ENCODE measurements at regions of chr11 and their contacts with region 1.

Region 1: DNA sequence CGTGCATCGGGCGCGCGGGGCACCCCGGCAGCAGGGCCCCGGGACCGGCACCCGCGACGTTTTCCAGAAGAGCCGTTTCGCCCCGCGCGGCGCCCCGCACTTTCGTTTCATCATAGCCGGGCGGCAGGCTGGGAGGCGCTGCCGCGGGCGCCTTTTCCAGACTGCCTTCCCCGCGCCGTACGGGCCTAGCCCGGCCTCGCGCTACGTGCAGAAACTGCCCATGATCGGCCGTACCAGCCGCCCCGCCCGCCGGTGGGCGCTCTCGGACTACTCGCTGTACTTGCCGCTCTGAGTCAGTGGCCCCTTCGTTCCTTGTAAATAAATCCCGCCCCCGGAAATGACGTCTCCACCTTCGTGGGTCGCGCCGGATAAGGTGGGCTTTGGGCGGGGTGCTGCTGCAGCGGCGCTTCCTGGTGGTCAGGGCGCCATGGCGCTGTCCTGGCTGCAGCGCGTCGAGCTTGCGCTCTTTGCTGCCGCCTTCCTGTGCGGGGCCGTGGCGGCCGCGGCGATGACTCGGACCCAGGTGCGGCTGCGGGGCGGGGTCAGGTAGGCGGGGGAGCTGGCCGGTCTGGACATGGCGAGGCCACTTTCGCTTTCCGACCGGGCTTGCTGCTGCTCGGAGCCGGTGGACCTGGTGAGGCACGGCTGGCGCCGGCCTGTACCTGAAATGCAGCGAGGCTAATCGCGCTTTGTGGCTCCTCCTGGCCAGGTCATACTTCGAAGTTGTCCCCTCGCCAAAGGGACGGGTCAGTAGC is at the start of gene TMEM179B:
- DNase-seq: peak; percentile 95 to 99 (median 96)
- H3K4me3 ChIP-seq: peak within 1 kb of the TSS; percentile 73 to 95
- H3K4me3 Mint-ChIP-seq: peak within 1 kb of the TSS; percentile 93 to 97 (median 96)
- H3K27ac ChIP-seq: peak within 1 kb of the TSS; percentile 84
- H3K27ac Mint-ChIP-seq: peak within 1 kb of the TSS; percentile 89 to 98 (median 97)
- H3K4me1 ChIP-seq: peaks cover 45% of the 10 kb centered on the region
- H3K4me1 Mint-ChIP-seq: peaks cover 29 to 61% (median 47%) of the 10 kb centered on the region in 4 donors
- H3K27me3 ChIP-seq: no peaks in the 10 kb centered on the region
- H3K27me3 Mint-ChIP-seq: no peaks in the 10 kb centered on the region
- total RNA-seq, gene TMEM179B: 66.3 to 66.6 TPM

Region 2: GRCh38 chr11:62771144-62772021 is 15.8 kb before region 1 on chr11 and contains the start of gene TAF6L:
- CTCF ChIA-PET with region 1: interaction called, 43 read pairs
- POLR2A ChIA-PET with region 1: interaction called, 53 read pairs
- intact Hi-C with region 1: loop called (anchors 1 kb)
- DNase-seq: peak; percentile 86 to 92 (median 88)
- H3K4me3 ChIP-seq: peak within 1 kb of the TSS; percentile 67 to 83
- H3K4me3 Mint-ChIP-seq: peak within 1 kb of the TSS; percentile 87 to 97 (median 92)
- H3K27ac ChIP-seq: peak within 1 kb of the TSS; percentile 82
- H3K27ac Mint-ChIP-seq: peak within 1 kb of the TSS; percentile 92 to 99 (median 97)
- H3K4me1 ChIP-seq: peaks cover 24% of the 10 kb centered on the region
- H3K4me1 Mint-ChIP-seq: peaks cover 14 to 32% (median 22%) of the 10 kb centered on the region in 4 donors
- H3K27me3 ChIP-seq: no peaks in the 10 kb centered on the region
- H3K27me3 Mint-ChIP-seq: no peaks in the 10 kb centered on the region
- total RNA-seq, gene TAF6L: 26.3 to 34.0 TPM

Region 3: GRCh38 chr11:62805076-62805892 is 18.1 kb after region 1 on chr11 and contains the start of gene NXF1:
- CTCF ChIA-PET with region 1: interaction called, 12 read pairs
- POLR2A ChIA-PET with region 1: interaction called, 188 read pairs
- intact Hi-C with region 1: loop called (anchors 1 kb)
- DNase-seq: peak; percentile 90 to 98 (median 96)
- H3K4me3 ChIP-seq: peak within 1 kb of the TSS; percentile 87 to 93
- H3K4me3 Mint-ChIP-seq: peak within 1 kb of the TSS; percentile 97 to 100 (median 99)
- H3K27ac ChIP-seq: peak within 1 kb of the TSS; percentile 94
- H3K27ac Mint-ChIP-seq: peak within 1 kb of the TSS; percentile 97 to 100 (median 99)
- H3K4me1 ChIP-seq: peaks cover 22% of the 10 kb centered on the region
- H3K4me1 Mint-ChIP-seq: peaks cover 20 to 43% (median 31%) of the 10 kb centered on the region in 4 donors
- H3K27me3 ChIP-seq: no peaks in the 10 kb centered on the region
- H3K27me3 Mint-ChIP-seq: peaks cover 0 to 2% of the 10 kb centered on the region in 2 donors
- total RNA-seq, gene NXF1: 195 to 196 TPM

Region 4: GRCh38 chr11:62860835-62861563 is 73.8 kb after region 1 on chr11:
- CTCF ChIA-PET with region 1: interaction called, 105 read pairs
- POLR2A ChIA-PET with region 1: interaction called, 263 read pairs
- intact Hi-C with region 1: loop called (anchors 1 kb)
- DNase-seq: no peak
- H3K4me3 ChIP-seq: no peak overlapping the region
- H3K4me3 Mint-ChIP-seq: no peak overlapping the region
- H3K27ac ChIP-seq: no peak overlapping the region
- H3K27ac Mint-ChIP-seq: peak overlapping the region in 2 of 7 donors; percentile 37 to 72
- H3K4me1 ChIP-seq: peaks cover 23% of the 10 kb centered on the region
- H3K4me1 Mint-ChIP-seq: peaks cover 11 to 25% (median 18%) of the 10 kb centered on the region in 4 donors
- H3K27me3 ChIP-seq: no peaks in the 10 kb centered on the region
- H3K27me3 Mint-ChIP-seq: no peaks in the 10 kb centered on the region

Region 5: DNA sequence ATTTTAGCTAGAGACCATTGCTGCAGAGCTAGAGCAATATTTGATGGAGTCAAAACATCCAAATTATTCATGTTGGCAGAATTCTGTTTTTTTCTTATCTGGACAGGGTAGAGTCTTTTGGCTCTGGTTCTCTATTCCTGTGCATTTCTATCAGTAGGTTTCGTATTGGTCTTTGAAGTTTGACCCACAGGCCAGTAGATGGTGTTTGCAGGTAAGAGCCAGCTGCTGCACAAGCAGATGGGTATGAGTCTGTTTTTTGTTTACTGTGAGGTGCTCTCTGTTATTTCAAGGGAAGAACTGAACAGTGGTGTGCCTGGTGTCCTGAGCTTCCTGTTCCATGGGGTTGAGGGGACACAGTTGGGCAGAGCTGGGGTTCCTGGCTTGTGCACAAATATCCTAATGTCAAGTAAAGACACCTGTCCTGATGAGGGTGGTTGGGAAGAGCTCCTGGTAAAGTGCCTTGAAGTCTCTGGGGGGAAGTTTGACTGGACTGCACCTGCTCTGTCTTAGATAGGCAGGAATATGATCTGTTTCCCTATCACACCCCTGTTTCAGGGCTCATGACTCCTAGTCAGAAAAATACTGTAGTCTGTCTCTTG is 490.3 kb after region 1 on chr11:
- CTCF ChIA-PET with region 1: no interaction called
- POLR2A ChIA-PET with region 1: no interaction called
- intact Hi-C with region 1: no loop called
- DNase-seq: no peak
- H3K4me3 ChIP-seq: no peak overlapping the region
- H3K4me3 Mint-ChIP-seq: no peak overlapping the region
- H3K27ac ChIP-seq: no peak overlapping the region
- H3K27ac Mint-ChIP-seq: no peak overlapping the region
- H3K4me1 ChIP-seq: no peaks in the 10 kb centered on the region
- H3K4me1 Mint-ChIP-seq: no peaks in the 10 kb centered on the region
- H3K27me3 ChIP-seq: no peaks in the 10 kb centered on the region
- H3K27me3 Mint-ChIP-seq: peaks cover 4 to 20% of the 10 kb centered on the region in 2 donors